Activated CD8-positive, alpha-beta T cell treated with anti-CD3 and anti-CD28 coated beads for 36 hours (primary cell): ENCODE measurements at regions of chr17 and their contacts with region 1.

Region 1: DNA sequence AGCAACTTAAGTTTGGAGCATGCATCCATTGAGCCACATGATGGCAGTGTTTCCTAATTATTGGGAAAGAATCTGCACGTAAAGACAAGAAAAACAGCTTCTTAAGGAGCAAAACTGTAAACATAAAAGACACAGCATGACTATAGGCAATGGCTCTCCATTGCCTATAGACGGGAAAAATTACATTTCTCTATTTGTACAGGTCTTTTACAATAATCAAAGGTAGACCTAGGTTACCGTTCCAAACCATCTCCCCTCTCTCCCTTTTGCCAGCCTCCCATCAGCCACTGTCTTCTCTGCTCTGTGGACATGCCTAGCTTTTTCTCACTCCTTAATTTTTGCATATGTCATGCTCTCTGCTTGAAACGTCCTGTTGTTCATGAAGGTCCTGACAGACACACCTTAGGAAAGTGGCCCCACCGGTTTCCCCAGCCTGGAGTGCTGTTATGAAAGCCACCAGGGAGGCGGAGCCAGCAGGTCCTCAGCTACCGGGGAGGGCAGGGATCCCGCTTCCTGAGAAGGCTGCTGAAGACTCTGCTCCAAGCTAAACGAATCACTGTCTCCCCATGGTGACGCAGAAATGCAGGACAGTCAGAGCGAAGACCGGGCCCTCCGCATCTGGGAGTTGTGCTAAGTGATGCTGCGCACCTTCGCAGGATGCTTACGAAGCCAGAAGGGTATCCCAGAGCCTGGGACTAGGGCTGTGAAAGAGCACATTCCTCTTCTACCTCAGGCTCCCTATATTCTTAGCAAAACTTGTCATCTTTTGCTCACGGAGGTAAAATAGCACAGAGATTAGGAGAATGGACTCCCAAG is 2.2 kb upstream of the SLC16A11 start:
- DNase-seq: peak; percentile 66
- ATAC-seq: peak; percentile 18
- H3K4me3 Mint-ChIP-seq: peak overlapping the region; percentile 73
- H3K27ac Mint-ChIP-seq: peak overlapping the region; percentile 86
- H3K4me1 Mint-ChIP-seq: peaks cover 38% of the 10 kb centered on the region
- H3K27me3 Mint-ChIP-seq: peaks cover 2% of the 10 kb centered on the region
- CTCF ChIP-seq: peak; percentile 85

Region 2: GRCh38 chr17:7029659-7030058 is 16.5 kb before region 1 on chr17:
- CTCF ChIA-PET with region 1: interaction called, 14 read pairs
- POLR2A ChIA-PET with region 1: interaction called, 8 read pairs
- intact Hi-C with region 1: no loop called
- DNase-seq: peak; percentile 82
- ATAC-seq: peak; percentile 86
- H3K4me3 Mint-ChIP-seq: peak overlapping the region; percentile 65
- H3K27ac Mint-ChIP-seq: peak overlapping the region; percentile 91
- H3K4me1 Mint-ChIP-seq: peaks cover 45% of the 10 kb centered on the region
- H3K27me3 Mint-ChIP-seq: no peaks in the 10 kb centered on the region
- CTCF ChIP-seq: no peak

Region 3: GRCh38 chr17:7136266-7136877 is 90.3 kb after region 1 on chr17:
- CTCF ChIA-PET with region 1: interaction called, 371 read pairs
- POLR2A ChIA-PET with region 1: interaction called, 8 read pairs
- intact Hi-C with region 1: loop called (anchors 1 kb)
- DNase-seq: peak; percentile 88
- ATAC-seq: no peak
- H3K4me3 Mint-ChIP-seq: no peak overlapping the region
- H3K27ac Mint-ChIP-seq: no peak overlapping the region
- H3K4me1 Mint-ChIP-seq: peaks cover 22% of the 10 kb centered on the region
- H3K27me3 Mint-ChIP-seq: peaks cover 6% of the 10 kb centered on the region
- CTCF ChIP-seq: peak; percentile 95

Region 4: DNA sequence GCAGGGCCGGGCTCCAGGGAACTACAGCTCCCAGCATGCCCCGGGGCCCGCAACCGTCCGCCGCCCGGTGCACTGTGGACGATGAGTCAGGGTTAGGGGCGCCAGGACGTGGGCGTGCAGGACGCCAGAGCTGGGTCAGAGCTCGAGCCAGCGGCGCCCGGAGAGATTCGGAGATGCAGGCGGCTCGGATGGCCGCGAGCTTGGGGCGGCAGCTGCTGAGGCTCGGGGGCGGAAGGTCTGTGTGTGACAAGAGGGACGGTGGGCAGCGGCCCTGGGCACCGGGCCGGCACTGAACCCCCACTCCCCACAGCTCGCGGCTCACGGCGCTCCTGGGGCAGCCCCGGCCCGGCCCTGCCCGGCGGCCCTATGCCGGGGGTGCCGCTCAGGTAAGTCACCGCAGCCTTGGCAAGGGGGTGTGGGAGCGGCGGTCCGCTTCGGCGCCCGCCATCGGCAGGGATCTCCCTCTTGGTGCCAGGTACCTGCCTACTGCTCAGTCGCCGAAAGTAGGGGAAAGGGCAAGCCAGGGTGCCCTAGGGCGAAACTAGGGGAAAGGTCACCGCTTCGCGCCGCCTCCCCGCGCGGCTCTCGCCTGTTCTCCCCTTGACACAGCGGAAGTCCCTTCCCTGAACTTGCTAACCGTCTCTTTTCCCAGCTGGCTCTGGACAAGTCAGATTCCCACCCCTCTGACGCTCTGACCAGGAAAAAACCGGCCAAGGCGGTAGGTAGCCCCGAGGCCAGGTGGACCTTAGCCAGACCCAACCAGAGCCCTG is 173.9 kb after region 1 on chr17 and contains the starts of genes ACADVL and DLG4:
- CTCF ChIA-PET with region 1: interaction called, 19 read pairs
- POLR2A ChIA-PET with region 1: interaction called, 4 read pairs
- intact Hi-C with region 1: no loop called
- DNase-seq: peak; percentile 96
- ATAC-seq: peak; percentile 74
- H3K4me3 Mint-ChIP-seq: peak within 1 kb of the TSS; percentile 94
- H3K27ac Mint-ChIP-seq: peak within 1 kb of the TSS; percentile 94
- H3K4me1 Mint-ChIP-seq: peaks cover 55% of the 10 kb centered on the region
- H3K27me3 Mint-ChIP-seq: no peaks in the 10 kb centered on the region
- CTCF ChIP-seq: no peak
- total RNA-seq, gene ACADVL: 288 to 291 TPM
- total RNA-seq, gene DLG4: 9.5 to 9.7 TPM